Sigmoid colon (tissue), 7 donors: ENCODE measurements at regions of chr13 and their contacts with region 1.

Region 1: GRCh38 chr13:76383676-76384461 is 502.3 kb downstream of the KCTD12 start:
- DNase-seq: peak; percentile 67
- H3K4me3 ChIP-seq: no peak overlapping the region
- H3K27ac ChIP-seq: peak overlapping the region; percentile 22 to 75 (median 66)
- H3K4me1 ChIP-seq: peaks cover 0 to 45% (median 43%) of the 10 kb centered on the region in 4 donors
- H3K27me3 ChIP-seq: no peaks in the 10 kb centered on the region
- CTCF ChIP-seq: no peak
- EP300 ChIP-seq: no peak
- POLR2A ChIP-seq: no peak

Region 2: DNA sequence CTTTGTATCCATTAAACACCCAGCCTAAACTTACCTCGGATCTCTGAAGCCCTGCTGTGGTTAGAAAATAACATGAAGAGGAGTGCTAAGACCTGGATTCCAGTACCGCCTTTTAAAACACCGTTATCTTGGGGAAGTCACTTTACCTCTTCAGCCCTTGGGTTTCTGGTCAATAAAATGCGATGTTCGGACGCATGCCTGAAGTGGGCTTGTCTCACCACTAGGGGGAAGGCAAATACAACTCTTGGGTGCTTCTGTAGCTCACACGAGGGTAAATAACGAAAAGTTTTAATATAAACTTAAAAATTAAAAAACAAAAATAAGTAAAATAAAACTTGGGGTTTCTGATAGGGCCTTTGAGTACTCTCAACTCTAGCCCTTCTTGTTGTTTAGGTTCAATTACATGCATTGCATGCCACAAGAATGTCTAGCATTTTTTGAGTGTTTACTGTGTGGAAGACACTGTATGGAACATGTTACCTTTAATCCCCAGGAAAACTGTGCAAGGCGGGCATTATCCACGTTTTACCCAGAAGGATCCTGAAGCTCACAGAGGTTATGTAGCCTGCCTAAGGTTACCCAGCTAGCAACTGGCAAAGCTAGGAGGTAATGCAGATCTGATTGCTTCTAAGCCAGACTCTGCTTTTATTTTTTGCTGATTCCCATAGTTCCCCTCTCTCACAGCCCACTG is 507.4 kb before region 1 on chr13:
- intact Hi-C with region 1: loop called (anchors 10 kb)
- DNase-seq: peak; percentile 67
- H3K4me3 ChIP-seq: no peak overlapping the region
- H3K27ac ChIP-seq: no peak overlapping the region
- H3K4me1 ChIP-seq: peaks cover 0 to 10% (median 3%) of the 10 kb centered on the region in 4 donors
- H3K27me3 ChIP-seq: no peaks in the 10 kb centered on the region
- CTCF ChIP-seq: peak; percentile 65 to 86 (median 78)
- EP300 ChIP-seq: no peak
- POLR2A ChIP-seq: no peak

Region 3: DNA sequence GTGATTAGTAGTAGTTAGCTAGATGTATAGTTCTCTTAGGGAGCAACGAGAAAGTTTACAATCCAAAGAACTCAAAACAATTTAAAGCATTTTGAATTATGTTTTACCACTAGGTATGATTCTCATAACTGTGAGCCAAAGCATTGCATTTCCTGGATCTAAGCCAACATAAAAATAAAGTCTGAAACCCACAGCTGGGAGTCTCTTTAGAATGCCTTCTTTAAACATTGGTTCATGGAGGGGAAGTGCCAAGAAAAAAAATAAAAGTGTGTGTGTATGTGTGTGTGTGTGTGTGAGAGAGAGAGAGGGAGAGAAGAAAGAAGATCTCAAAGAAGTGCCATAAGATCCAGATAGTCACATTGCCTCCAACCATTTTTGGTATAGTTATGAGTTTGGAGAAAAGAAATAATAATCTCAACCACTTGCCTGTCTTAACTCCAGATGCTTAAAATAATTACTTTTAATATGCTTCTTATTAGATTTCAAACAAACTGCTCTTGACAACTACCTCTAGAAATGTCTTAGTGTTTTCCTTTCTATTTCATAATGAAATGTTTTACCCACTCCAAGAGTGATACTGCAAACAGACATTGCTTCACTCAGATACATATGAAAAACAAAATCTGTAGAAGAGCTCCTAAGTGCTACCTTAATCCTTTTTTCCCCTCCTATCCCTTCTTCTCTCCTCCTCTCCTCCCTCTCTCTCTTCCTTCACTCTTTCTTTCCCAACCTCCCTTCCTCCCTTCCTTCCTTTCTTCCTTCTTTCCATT is 51.7 kb before region 1 on chr13:
- intact Hi-C with region 1: loop called (anchors 5 kb)
- DNase-seq: no peak
- H3K4me3 ChIP-seq: no peak overlapping the region
- H3K27ac ChIP-seq: peak overlapping the region in 3 of 4 donors; percentile 51 to 68 (median 61)
- H3K4me1 ChIP-seq: peaks cover 0 to 76% (median 44%) of the 10 kb centered on the region in 4 donors
- H3K27me3 ChIP-seq: no peaks in the 10 kb centered on the region
- CTCF ChIP-seq: no peak
- EP300 ChIP-seq: no peak
- POLR2A ChIP-seq: no peak

Region 4: DNA sequence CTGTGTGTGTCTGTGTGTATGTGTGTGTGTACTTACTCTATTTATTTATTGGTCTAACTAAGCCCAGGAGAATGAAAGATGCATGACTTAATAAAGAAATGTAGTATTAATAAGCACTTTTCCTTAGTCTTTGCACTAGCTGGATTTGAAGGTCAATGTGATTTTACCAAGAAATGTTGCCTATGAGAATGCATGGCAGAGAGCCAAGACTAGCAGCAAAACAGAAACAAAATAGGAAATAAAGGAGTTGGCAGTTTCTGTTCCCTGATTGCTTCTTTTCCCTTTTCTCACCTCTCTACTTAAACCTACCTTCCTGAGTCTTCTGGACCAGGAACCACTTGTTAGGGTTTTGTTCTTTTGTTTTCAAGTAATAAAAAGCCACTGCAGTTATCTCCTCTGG is 216.2 kb after region 1 on chr13:
- intact Hi-C with region 1: no loop called
- DNase-seq: no peak
- H3K4me3 ChIP-seq: no peak overlapping the region
- H3K27ac ChIP-seq: no peak overlapping the region
- H3K4me1 ChIP-seq: peaks cover 0 to 34% (median 22%) of the 10 kb centered on the region in 4 donors
- H3K27me3 ChIP-seq: no peaks in the 10 kb centered on the region
- CTCF ChIP-seq: no peak
- EP300 ChIP-seq: no peak
- POLR2A ChIP-seq: no peak

Region 5: GRCh38 chr13:76696370-76696769 is 312.5 kb after region 1 on chr13:
- intact Hi-C with region 1: no loop called
- DNase-seq: no peak
- H3K4me3 ChIP-seq: no peak overlapping the region
- H3K27ac ChIP-seq: peak overlapping the region in 1 of 4 donors; percentile 3
- H3K4me1 ChIP-seq: no peaks in the 10 kb centered on the region
- H3K27me3 ChIP-seq: no peaks in the 10 kb centered on the region
- CTCF ChIP-seq: no peak
- EP300 ChIP-seq: no peak
- POLR2A ChIP-seq: no peak

Region 6: DNA sequence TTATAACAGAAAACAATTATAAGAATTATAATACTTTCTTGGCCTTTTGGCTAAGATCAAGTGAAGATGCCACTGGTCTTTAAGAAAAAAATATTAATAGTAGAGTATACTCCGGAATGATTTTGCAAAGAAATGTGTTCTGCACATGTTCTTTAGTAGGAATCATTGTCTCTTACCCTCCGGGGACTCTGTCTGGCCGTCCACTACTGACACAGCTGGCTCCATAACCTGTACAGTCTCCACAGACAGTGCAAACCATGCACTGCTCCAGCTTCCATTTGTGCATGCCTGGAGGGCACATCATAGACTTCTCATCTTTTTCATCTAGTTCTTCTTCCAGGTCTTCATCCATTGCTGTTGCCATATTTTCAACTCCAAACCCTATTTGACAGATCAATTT is 867.1 kb after region 1 on chr13:
- intact Hi-C with region 1: no loop called
- DNase-seq: no peak
- H3K4me3 ChIP-seq: no peak overlapping the region
- H3K27ac ChIP-seq: no peak overlapping the region
- H3K4me1 ChIP-seq: no peaks in the 10 kb centered on the region
- H3K27me3 ChIP-seq: no peaks in the 10 kb centered on the region
- CTCF ChIP-seq: no peak
- EP300 ChIP-seq: no peak
- POLR2A ChIP-seq: no peak